Prostate gland (tissue), 2 donors: ENCODE measurements at regions of chr3 and their contacts with region 1.

Region 1: GRCh38 chr3:37210230-37210629 is 35.8 kb upstream of the LRRFIP2 start:
- DNase-seq: peak; percentile 23
- H3K4me3 ChIP-seq: no peak overlapping the region
- H3K27ac ChIP-seq: no peak overlapping the region
- H3K4me1 ChIP-seq: no peaks in the 10 kb centered on the region
- H3K27me3 ChIP-seq: no peaks in the 10 kb centered on the region
- CTCF ChIP-seq: no peak
- POLR2A ChIP-seq: no peak

Region 2: GRCh38 chr3:37024092-37024491 is 186.1 kb before region 1 on chr3:
- intact Hi-C with region 1: loop called (anchors 2 kb)
- DNase-seq: no peak
- H3K4me3 ChIP-seq: no peak overlapping the region
- H3K27ac ChIP-seq: peak overlapping the region in 1 of 2 donors; percentile 49
- H3K4me1 ChIP-seq: peaks cover 4% of the 10 kb centered on the region
- H3K27me3 ChIP-seq: no peaks in the 10 kb centered on the region
- CTCF ChIP-seq: peak in 3 of 4 experiments; percentile 44 to 81 (median 69)
- POLR2A ChIP-seq: no peak